ENCODE measurements at regions of chr2 and their contacts with region 1.

Region 1: DNA sequence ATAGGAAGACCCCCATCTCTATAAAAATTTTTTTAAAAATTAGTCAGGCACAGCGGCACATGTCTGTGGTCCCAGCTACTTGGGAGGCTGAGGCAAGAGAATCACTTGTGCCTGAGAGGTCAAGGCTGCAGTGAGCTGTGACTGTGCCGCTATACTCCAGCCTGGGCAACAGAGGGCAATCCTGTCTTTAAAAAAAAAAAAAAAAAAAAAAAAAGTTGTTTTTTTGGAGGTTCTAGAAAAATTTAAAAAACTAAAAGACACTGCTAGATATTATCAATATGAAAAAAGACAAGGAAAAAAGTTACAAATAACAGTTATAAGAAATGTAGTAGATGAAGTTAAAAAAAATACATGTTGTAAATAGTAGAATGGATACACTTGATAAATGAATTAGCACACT is 56.1 kb upstream of the C2orf15 start:
- DNase-seq: no peak
- H3K4me3 ChIP-seq: no peak overlapping the region
- H3K4me3 Mint-ChIP-seq: no peak overlapping the region
- H3K27ac ChIP-seq: no peak overlapping the region
- H3K27ac Mint-ChIP-seq: no peak overlapping the region
- H3K4me1 ChIP-seq: no peaks in the 10 kb centered on the region
- H3K4me1 Mint-ChIP-seq: peaks cover 4% of the 10 kb centered on the region
- H3K27me3 ChIP-seq: no peaks in the 10 kb centered on the region
- H3K27me3 Mint-ChIP-seq: peaks cover 0 to 6% (median 0%) of the 10 kb centered on the region in 3 donors
- CTCF ChIP-seq: peak; percentile 44

Region 2: DNA sequence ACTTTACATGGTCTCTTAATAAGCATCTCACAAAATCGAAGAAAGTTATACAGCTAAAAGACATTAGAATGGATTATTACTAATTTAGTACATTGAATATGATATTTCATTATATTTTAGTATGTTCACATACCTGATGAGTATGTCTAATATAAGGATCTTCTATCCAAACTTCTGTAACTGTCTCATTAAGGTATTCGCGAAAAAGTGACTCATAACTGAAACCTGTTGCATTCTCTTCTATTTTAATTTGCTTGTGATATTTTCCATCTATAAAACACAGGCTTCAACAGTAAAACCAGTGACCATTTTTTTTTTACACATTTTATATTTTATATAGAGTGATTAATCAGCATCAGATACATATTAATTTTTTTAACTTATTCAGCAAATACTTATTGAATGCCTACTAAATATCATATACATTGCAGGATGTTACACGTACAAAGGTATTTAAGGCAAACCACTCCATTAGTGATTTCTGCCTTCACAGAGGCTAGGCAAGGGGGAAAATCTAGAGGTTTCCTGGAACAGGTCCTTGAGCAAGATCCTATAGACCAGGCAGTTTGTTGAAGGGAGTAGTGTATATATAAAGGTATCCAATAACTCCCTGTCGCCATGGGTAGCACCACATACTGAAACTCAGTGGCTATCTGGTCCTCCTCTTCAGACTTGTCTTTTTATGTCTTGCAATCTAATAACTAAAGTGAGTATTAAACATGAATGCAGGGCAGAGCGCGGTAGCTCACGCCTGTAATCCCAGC is 86.1 kb after region 1 on chr2:
- intact Hi-C with region 1: loop called in 1 of 2 experiments (anchors 10 kb)
- DNase-seq: no peak
- H3K4me3 ChIP-seq: no peak overlapping the region
- H3K4me3 Mint-ChIP-seq: no peak overlapping the region
- H3K27ac ChIP-seq: no peak overlapping the region
- H3K27ac Mint-ChIP-seq: peak overlapping the region in 1 of 7 donors; percentile 82
- H3K4me1 ChIP-seq: no peaks in the 10 kb centered on the region
- H3K4me1 Mint-ChIP-seq: peaks cover 3% of the 10 kb centered on the region
- H3K27me3 ChIP-seq: no peaks in the 10 kb centered on the region
- H3K27me3 Mint-ChIP-seq: no peaks in the 10 kb centered on the region
- CTCF ChIP-seq: no peak

Region 3: GRCh38 chr2:99337113-99338028 is 251.9 kb after region 1 on chr2 and contains the start of gene EIF5B:
- intact Hi-C with region 1: no loop called
- DNase-seq: peak; percentile 91 to 97 (median 93)
- H3K4me3 ChIP-seq: peak within 1 kb of the TSS; percentile 68 to 94 (median 94)
- H3K4me3 Mint-ChIP-seq: no peak within 1 kb of the TSS
- H3K27ac ChIP-seq: peak within 1 kb of the TSS; percentile 84 to 94
- H3K27ac Mint-ChIP-seq: no peak within 1 kb of the TSS
- H3K4me1 ChIP-seq: peaks cover 18 to 34% of the 10 kb centered on the region in 2 donors
- H3K4me1 Mint-ChIP-seq: peaks cover 21% of the 10 kb centered on the region
- H3K27me3 ChIP-seq: no peaks in the 10 kb centered on the region
- H3K27me3 Mint-ChIP-seq: no peaks in the 10 kb centered on the region
- CTCF ChIP-seq: peak; percentile 78
- polyA plus RNA-seq, gene EIF5B: 0.58 to 3.2 (median 1.5) TPM

Measured in CD14-positive monocyte (primary cell).